B cell (primary cell): ENCODE measurements at regions of chr6 and their contacts with region 1.

Region 1: GRCh38 chr6:13538084-13538483 is 36.3 kb upstream of the SIRT5 start:
- DNase-seq: peak; percentile 64
- ATAC-seq: peak; percentile 56
- H3K4me3 ChIP-seq: no peak overlapping the region
- H3K4me3 Mint-ChIP-seq: no peak overlapping the region
- H3K27ac ChIP-seq: no peak overlapping the region
- H3K27ac Mint-ChIP-seq: no peak overlapping the region
- H3K4me1 ChIP-seq: peaks cover 6 to 8% of the 10 kb centered on the region in 2 donors
- H3K4me1 Mint-ChIP-seq: peaks cover 17% of the 10 kb centered on the region
- H3K27me3 ChIP-seq: no peaks in the 10 kb centered on the region
- H3K27me3 Mint-ChIP-seq: no peaks in the 10 kb centered on the region
- CTCF ChIP-seq: peak; percentile 54

Region 2: GRCh38 chr6:13515912-13516311 is 22.2 kb before region 1 on chr6:
- CTCF ChIA-PET with region 1: no interaction called
- POLR2A ChIA-PET with region 1: no interaction called
- intact Hi-C with region 1: no loop called
- DNase-seq: no peak
- ATAC-seq: no peak
- H3K4me3 ChIP-seq: no peak overlapping the region
- H3K4me3 Mint-ChIP-seq: no peak overlapping the region
- H3K27ac ChIP-seq: no peak overlapping the region
- H3K27ac Mint-ChIP-seq: no peak overlapping the region
- H3K4me1 ChIP-seq: no peaks in the 10 kb centered on the region
- H3K4me1 Mint-ChIP-seq: no peaks in the 10 kb centered on the region
- H3K27me3 ChIP-seq: no peaks in the 10 kb centered on the region
- H3K27me3 Mint-ChIP-seq: no peaks in the 10 kb centered on the region
- CTCF ChIP-seq: no peak

Region 3: DNA sequence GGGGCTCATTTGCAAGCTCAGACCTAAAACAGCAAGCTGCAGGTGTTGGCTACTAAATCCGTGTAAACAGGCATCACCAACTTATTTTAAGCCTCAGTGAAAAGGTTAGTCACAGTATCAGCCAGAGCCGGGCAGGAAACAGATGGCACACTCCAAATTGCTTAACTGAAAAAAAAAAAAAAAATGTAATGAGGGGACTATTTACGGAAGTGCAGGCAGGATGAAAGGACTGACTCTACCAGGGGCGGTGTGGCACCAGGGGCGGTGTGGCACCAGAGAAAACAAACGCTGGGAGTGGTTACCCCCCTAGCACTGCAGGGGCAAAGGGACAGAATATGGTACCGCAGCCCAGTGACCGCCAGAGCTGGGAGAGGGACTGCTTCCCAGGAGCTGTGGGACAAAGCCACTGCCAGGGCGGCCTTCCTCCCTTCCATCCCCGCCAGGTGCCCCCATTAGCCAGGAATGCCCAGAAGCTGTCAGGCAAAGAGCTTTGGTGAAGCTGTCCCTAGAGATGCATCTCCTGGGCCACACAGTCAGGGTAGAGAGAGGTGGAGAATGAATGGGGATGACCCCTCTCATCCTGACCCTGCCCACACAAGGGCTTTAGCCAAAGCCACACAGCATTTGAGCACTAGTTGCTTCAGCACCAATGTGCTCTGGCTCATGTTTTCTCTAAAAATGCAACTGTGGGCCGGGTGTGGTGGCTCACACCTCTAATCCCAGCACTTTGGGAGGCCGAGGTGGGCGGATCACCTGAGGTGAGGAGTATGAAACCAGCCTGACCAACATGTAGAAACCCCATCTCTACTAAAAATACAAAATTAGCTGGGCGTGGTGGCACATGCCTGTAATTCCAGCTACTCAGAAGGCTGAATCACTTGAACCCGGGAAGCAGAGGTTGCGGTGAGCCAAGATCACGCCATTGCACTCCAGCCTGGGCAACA is 11.1 kb before region 1 on chr6:
- CTCF ChIA-PET with region 1: interaction called, 42 read pairs
- POLR2A ChIA-PET with region 1: interaction called, 6 read pairs
- intact Hi-C with region 1: loop called (anchors 1 kb)
- DNase-seq: peak; percentile 86
- ATAC-seq: peak; percentile 88
- H3K4me3 ChIP-seq: peak overlapping the region in 3 of 5 experiments; percentile 0 to 33 (median 11)
- H3K4me3 Mint-ChIP-seq: peak overlapping the region; percentile 40
- H3K27ac ChIP-seq: peak overlapping the region; percentile 76 to 89
- H3K27ac Mint-ChIP-seq: peak overlapping the region; percentile 88
- H3K4me1 ChIP-seq: peaks cover 38 to 41% of the 10 kb centered on the region in 2 donors
- H3K4me1 Mint-ChIP-seq: peaks cover 47% of the 10 kb centered on the region
- H3K27me3 ChIP-seq: no peaks in the 10 kb centered on the region
- H3K27me3 Mint-ChIP-seq: no peaks in the 10 kb centered on the region
- CTCF ChIP-seq: peak; percentile 33